OCI-LY7 (cell line): ENCODE measurements at regions of chr9 and their contacts with region 1.

Region 1: GRCh38 chr9:113221003-113221799 is at the starts of genes FKBP15 and SLC31A1:
- DNase-seq: peak; percentile 98
- H3K4me3 ChIP-seq: peak within 1 kb of the TSS; percentile 92
- H3K27ac ChIP-seq: peak within 1 kb of the TSS; percentile 89
- H3K4me1 ChIP-seq: peaks cover 40% of the 10 kb centered on the region
- CTCF ChIP-seq: no peak
- total RNA-seq, gene FKBP15: 25.5 and 39.9 TPM in 2 replicates
- total RNA-seq, gene SLC31A1: 3.9 and 4.7 TPM in 2 replicates

Region 2: GRCh38 chr9:113150670-113151611 is 70.3 kb before region 1 on chr9 and contains the start of gene SLC31A2:
- CTCF ChIA-PET with region 1: interaction called, 4 read pairs
- POLR2A ChIA-PET with region 1: no interaction called
- intact Hi-C with region 1: loop called (anchors 1 kb)
- DNase-seq: peak; percentile 90
- H3K4me3 ChIP-seq: peak within 1 kb of the TSS; percentile 87
- H3K27ac ChIP-seq: no peak within 1 kb of the TSS
- H3K4me1 ChIP-seq: peaks cover 6% of the 10 kb centered on the region
- CTCF ChIP-seq: peak; percentile 74
- total RNA-seq, gene SLC31A2: 0.70 and 2.7 TPM in 2 replicates

Region 3: GRCh38 chr9:113196967-113197366 is 24.2 kb before region 1 on chr9:
- CTCF ChIA-PET with region 1: no interaction called
- POLR2A ChIA-PET with region 1: no interaction called
- intact Hi-C with region 1: no loop called
- DNase-seq: no peak
- H3K4me3 ChIP-seq: no peak overlapping the region
- H3K27ac ChIP-seq: no peak overlapping the region
- H3K4me1 ChIP-seq: no peaks in the 10 kb centered on the region
- CTCF ChIP-seq: no peak

Region 4: DNA sequence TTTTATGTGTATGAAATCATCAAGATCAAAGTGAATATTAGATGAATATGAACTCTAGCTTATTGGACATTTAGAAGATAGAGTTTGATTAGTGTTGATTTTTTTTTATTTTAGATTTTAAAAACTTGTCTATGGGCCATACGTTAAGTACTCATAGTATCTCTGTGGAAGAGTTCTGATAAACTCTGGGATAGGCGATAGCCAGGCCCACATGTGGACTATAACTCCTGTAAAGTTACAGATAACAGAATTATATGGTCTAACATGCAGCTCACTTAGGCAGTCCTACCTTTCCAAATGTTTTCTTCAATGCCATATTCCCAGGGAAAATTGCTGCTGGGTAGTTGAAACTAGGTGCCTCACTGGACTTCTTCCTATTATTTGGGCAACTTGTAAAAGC is 10.5 kb after region 1 on chr9:
- CTCF ChIA-PET with region 1: interaction called, 3 read pairs
- POLR2A ChIA-PET with region 1: interaction called, 31 read pairs
- intact Hi-C with region 1: no loop called
- DNase-seq: no peak
- H3K4me3 ChIP-seq: no peak overlapping the region
- H3K27ac ChIP-seq: no peak overlapping the region
- H3K4me1 ChIP-seq: peaks cover 11% of the 10 kb centered on the region
- CTCF ChIP-seq: no peak

Region 5: DNA sequence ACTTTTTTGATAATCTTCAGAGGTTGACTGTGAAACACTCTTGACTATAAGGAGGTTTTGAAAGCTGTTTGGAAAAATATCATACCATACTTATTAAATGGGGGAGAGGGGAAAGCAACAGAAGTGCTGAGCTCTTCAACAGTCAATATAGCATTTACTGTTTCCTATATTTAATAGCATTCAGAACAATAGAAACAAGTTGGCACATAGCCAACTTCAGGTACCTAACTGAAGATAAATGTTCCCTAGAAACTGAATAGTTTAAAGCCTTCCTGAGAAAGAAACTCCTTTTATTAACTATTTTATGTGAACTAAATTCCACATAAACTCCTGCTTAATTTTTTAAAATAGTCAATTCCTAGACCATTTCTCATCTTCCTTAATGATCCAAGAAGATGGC is 26.4 kb after region 1 on chr9:
- CTCF ChIA-PET with region 1: interaction called, 4 read pairs
- POLR2A ChIA-PET with region 1: interaction called, 10 read pairs
- intact Hi-C with region 1: no loop called
- DNase-seq: no peak
- H3K4me3 ChIP-seq: no peak overlapping the region
- H3K27ac ChIP-seq: no peak overlapping the region
- H3K4me1 ChIP-seq: peaks cover 19% of the 10 kb centered on the region
- CTCF ChIP-seq: no peak

Region 6: GRCh38 chr9:113275157-113276131 is 54.2 kb after region 1 on chr9 and contains the starts of genes CDC26 and PRPF4:
- CTCF ChIA-PET with region 1: no interaction called
- POLR2A ChIA-PET with region 1: interaction called, 22 read pairs
- intact Hi-C with region 1: loop called (anchors 2 kb)
- DNase-seq: peak; percentile 97
- H3K4me3 ChIP-seq: peak within 1 kb of the TSS; percentile 84
- H3K27ac ChIP-seq: peak within 1 kb of the TSS; percentile 68
- H3K4me1 ChIP-seq: peaks cover 29% of the 10 kb centered on the region
- CTCF ChIP-seq: no peak
- total RNA-seq, gene CDC26: 29.9 and 42.5 TPM in 2 replicates
- total RNA-seq, gene PRPF4: 27.4 and 27.8 TPM in 2 replicates

Region 7: DNA sequence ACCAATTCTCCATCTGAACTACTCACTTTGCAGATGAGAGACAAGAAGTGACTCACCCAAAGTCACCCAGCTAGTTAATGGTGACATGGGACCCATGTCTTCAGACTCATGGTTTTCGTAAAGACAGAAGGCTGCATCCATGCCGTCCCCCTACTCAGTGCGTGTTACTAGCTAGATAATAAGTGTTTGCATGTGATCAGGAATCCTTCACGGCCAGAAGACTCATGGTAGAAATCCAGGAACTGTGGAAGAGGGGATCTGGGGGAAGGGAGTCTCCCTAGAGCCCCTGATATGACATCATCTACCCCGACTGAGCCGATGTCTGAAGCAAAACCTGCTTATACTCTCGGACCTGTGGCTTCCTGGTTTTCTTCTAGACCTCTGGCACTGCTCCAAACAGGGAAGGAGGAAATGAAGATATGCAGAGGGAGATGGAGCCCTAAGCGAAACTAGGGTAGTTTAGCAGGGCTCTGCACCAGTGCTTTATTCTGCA is 78.6 kb after region 1 on chr9:
- CTCF ChIA-PET with region 1: no interaction called
- POLR2A ChIA-PET with region 1: no interaction called
- intact Hi-C with region 1: no loop called
- DNase-seq: no peak
- H3K4me3 ChIP-seq: no peak overlapping the region
- H3K27ac ChIP-seq: no peak overlapping the region
- H3K4me1 ChIP-seq: peaks cover 10% of the 10 kb centered on the region
- CTCF ChIP-seq: no peak

Region 8: GRCh38 chr9:113737517-113738271 is 516.5 kb after region 1 on chr9:
- CTCF ChIA-PET with region 1: no interaction called
- POLR2A ChIA-PET with region 1: no interaction called
- intact Hi-C with region 1: no loop called
- DNase-seq: peak; percentile 51
- H3K4me3 ChIP-seq: no peak overlapping the region
- H3K27ac ChIP-seq: no peak overlapping the region
- H3K4me1 ChIP-seq: no peaks in the 10 kb centered on the region
- CTCF ChIP-seq: peak; percentile 90

Region 9: GRCh38 chr9:113876151-113876992 is 655.2 kb after region 1 on chr9 and contains the start of gene ZNF618:
- CTCF ChIA-PET with region 1: no interaction called
- POLR2A ChIA-PET with region 1: no interaction called
- intact Hi-C with region 1: no loop called
- DNase-seq: peak; percentile 48
- H3K4me3 ChIP-seq: peak within 1 kb of the TSS; percentile 71
- H3K27ac ChIP-seq: no peak within 1 kb of the TSS
- H3K4me1 ChIP-seq: no peaks in the 10 kb centered on the region
- CTCF ChIP-seq: peak; percentile 80
- total RNA-seq, gene ZNF618: not detected in 2 replicates